B cell (primary cell): ENCODE measurements at regions of chr5 and their contacts with region 1.

Region 1: GRCh38 chr5:99004960-99005359 is 76.2 kb upstream of the CHD1 start:
- DNase-seq: peak; percentile 86
- ATAC-seq: peak; percentile 99
- H3K4me3 ChIP-seq: no peak overlapping the region
- H3K4me3 Mint-ChIP-seq: peak overlapping the region; percentile 42
- H3K27ac ChIP-seq: no peak overlapping the region
- H3K27ac Mint-ChIP-seq: peak overlapping the region; percentile 80
- H3K4me1 ChIP-seq: peaks cover 15 to 22% of the 10 kb centered on the region in 2 donors
- H3K4me1 Mint-ChIP-seq: peaks cover 29% of the 10 kb centered on the region
- H3K27me3 ChIP-seq: no peaks in the 10 kb centered on the region
- H3K27me3 Mint-ChIP-seq: no peaks in the 10 kb centered on the region
- CTCF ChIP-seq: no peak

Region 2: GRCh38 chr5:98975682-98976407 is 29.1 kb before region 1 on chr5:
- CTCF ChIA-PET with region 1: interaction called, 4 read pairs
- POLR2A ChIA-PET with region 1: no interaction called
- intact Hi-C with region 1: loop called (anchors 2 kb)
- DNase-seq: peak; percentile 62
- ATAC-seq: peak; percentile 93
- H3K4me3 ChIP-seq: no peak overlapping the region
- H3K4me3 Mint-ChIP-seq: peak overlapping the region; percentile 48
- H3K27ac ChIP-seq: no peak overlapping the region
- H3K27ac Mint-ChIP-seq: peak overlapping the region; percentile 26
- H3K4me1 ChIP-seq: peaks cover 19 to 20% of the 10 kb centered on the region in 2 donors
- H3K4me1 Mint-ChIP-seq: peaks cover 22% of the 10 kb centered on the region
- H3K27me3 ChIP-seq: no peaks in the 10 kb centered on the region
- H3K27me3 Mint-ChIP-seq: no peaks in the 10 kb centered on the region
- CTCF ChIP-seq: no peak

Region 3: GRCh38 chr5:99025298-99026045 is 20.5 kb after region 1 on chr5:
- CTCF ChIA-PET with region 1: interaction called, 4 read pairs
- POLR2A ChIA-PET with region 1: no interaction called
- intact Hi-C with region 1: loop called (anchors 2 kb)
- DNase-seq: no peak
- ATAC-seq: no peak
- H3K4me3 ChIP-seq: no peak overlapping the region
- H3K4me3 Mint-ChIP-seq: no peak overlapping the region
- H3K27ac ChIP-seq: peak overlapping the region in 1 of 2 donors; percentile 75
- H3K27ac Mint-ChIP-seq: peak overlapping the region; percentile 37
- H3K4me1 ChIP-seq: peaks cover 43 to 46% of the 10 kb centered on the region in 2 donors
- H3K4me1 Mint-ChIP-seq: peaks cover 45% of the 10 kb centered on the region
- H3K27me3 ChIP-seq: no peaks in the 10 kb centered on the region
- H3K27me3 Mint-ChIP-seq: no peaks in the 10 kb centered on the region
- CTCF ChIP-seq: no peak

Region 4: GRCh38 chr5:99272576-99272975 is 267.6 kb after region 1 on chr5:
- CTCF ChIA-PET with region 1: no interaction called
- POLR2A ChIA-PET with region 1: no interaction called
- intact Hi-C with region 1: no loop called
- DNase-seq: no peak
- ATAC-seq: no peak
- H3K4me3 ChIP-seq: no peak overlapping the region
- H3K4me3 Mint-ChIP-seq: no peak overlapping the region
- H3K27ac ChIP-seq: no peak overlapping the region
- H3K27ac Mint-ChIP-seq: no peak overlapping the region
- H3K4me1 ChIP-seq: no peaks in the 10 kb centered on the region
- H3K4me1 Mint-ChIP-seq: no peaks in the 10 kb centered on the region
- H3K27me3 ChIP-seq: no peaks in the 10 kb centered on the region
- H3K27me3 Mint-ChIP-seq: no peaks in the 10 kb centered on the region
- CTCF ChIP-seq: no peak